Activated naive CD4-positive, alpha-beta T cell treated with anti-CD3 and anti-CD28 coated beads for 36 hours (primary cell): ENCODE measurements at regions of chr5 and their contacts with region 1.

Region 1: DNA sequence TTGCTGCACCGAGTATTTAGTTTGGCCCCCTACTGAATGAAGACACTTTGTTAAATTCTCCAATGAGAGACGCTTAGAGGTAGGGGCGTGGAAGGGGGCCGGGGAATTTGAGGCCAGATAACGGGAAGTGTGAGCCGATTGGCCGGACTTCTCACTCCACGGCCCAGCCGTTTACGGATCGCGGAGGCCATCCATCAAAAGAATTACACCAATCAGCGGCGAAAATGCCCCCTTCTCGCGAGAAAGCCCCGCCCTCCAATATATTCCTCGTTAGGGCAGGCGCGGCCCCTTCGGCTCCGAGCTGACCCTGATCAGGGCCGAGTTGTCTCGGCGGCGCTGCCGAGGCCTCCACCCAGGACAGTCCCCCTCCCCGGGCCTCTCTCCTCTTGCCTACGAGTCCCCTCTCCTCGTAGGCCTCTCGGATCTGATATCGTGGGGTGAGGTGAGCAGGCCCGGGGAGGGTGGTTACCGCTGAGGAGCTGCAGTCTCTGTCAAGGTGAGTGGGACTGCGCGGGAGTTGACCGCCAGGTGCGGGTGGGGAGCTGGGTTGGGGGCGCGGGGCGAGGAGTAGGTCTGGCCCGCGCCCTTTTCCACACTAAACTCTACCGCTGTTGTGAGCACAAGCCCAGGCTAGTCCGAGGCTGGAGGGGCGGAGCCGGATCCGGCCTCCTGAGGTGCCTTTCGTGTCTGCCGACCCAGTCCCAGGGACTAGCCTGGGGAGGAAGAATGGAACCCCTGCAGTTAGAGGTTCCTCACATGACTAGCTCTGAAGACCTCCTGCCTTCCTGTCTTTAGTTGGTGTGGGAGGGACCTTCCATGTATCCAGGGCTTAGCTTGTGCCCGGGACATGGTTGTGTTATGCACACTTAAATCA is at the start of gene CCNG1:
- DNase-seq: peak; percentile 95
- H3K4me3 Mint-ChIP-seq: peak within 1 kb of the TSS; percentile 91
- H3K27ac Mint-ChIP-seq: peak within 1 kb of the TSS; percentile 90
- H3K4me1 Mint-ChIP-seq: peaks cover 44% of the 10 kb centered on the region
- H3K27me3 Mint-ChIP-seq: no peaks in the 10 kb centered on the region
- total RNA-seq, gene CCNG1: 213 to 227 TPM

Region 2: DNA sequence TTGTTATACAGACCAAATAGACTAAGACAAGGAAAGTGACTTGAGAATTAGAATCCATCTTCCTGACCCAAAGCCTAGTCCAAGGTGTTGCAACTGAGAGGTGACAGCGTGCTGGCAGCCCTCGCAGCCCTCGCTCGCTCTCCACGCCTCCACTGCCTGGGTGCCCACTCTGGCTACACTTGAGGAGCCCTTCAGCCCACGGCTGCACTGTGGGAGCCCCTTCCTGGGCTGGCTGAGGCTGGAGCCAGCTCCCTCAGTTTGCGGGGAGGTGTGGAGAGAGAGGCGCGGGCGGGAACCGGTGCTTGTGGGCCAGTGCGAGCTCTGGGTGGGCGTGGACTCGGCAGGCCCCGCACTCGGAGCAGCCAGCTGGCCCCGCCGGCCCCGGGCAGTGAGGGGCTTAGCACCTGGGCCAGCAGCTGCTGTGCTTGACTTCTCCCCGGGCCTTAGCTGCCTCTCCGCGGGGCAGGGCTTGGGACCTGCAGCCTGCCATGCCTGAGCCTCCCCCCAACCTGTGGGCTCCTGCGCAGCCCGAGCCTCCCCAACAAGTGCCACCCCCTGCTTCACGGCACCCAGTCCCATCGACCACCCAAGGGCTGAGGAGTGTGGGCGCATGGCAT is 81.8 kb before region 1 on chr5:
- CTCF ChIA-PET with region 1: no interaction called
- intact Hi-C with region 1: no loop called
- DNase-seq: no peak
- H3K4me3 Mint-ChIP-seq: no peak overlapping the region
- H3K27ac Mint-ChIP-seq: no peak overlapping the region
- H3K4me1 Mint-ChIP-seq: no peaks in the 10 kb centered on the region
- H3K27me3 Mint-ChIP-seq: peaks cover 2% of the 10 kb centered on the region

Region 3: GRCh38 chr5:163453705-163454104 is 16.2 kb after region 1 on chr5:
- CTCF ChIA-PET with region 1: interaction called, 18 read pairs
- intact Hi-C with region 1: loop called (anchors 2 kb)
- DNase-seq: no peak
- H3K4me3 Mint-ChIP-seq: no peak overlapping the region
- H3K27ac Mint-ChIP-seq: no peak overlapping the region
- H3K4me1 Mint-ChIP-seq: peaks cover 23% of the 10 kb centered on the region
- H3K27me3 Mint-ChIP-seq: no peaks in the 10 kb centered on the region

Region 4: GRCh38 chr5:163459922-163460766 is 22.6 kb after region 1 on chr5 and contains the starts of genes HMMR and NUDCD2:
- CTCF ChIA-PET with region 1: interaction called, 18 read pairs
- intact Hi-C with region 1: loop called (anchors 1 kb)
- DNase-seq: peak; percentile 96
- H3K4me3 Mint-ChIP-seq: peak within 1 kb of the TSS; percentile 94
- H3K27ac Mint-ChIP-seq: peak within 1 kb of the TSS; percentile 100
- H3K4me1 Mint-ChIP-seq: peaks cover 27% of the 10 kb centered on the region
- H3K27me3 Mint-ChIP-seq: no peaks in the 10 kb centered on the region
- total RNA-seq, gene HMMR: 91.8 to 99.8 TPM
- total RNA-seq, gene NUDCD2: 51.5 to 55.5 TPM